Dendritic cell treated with granulocyte-macrophage colony-stimulating factor and Interleukin-4, amounts not matched to agents 40 ng/mL and 50 ng/mL, for 4 days (primary cell): ENCODE measurements at regions of chr12 and their contacts with region 1.

Region 1: GRCh38 chr12:10190558-10191388 is 11.9 kb downstream of the TMEM52B start:
- H3K4me3 Mint-ChIP-seq: no peak overlapping the region
- H3K27ac Mint-ChIP-seq: no peak overlapping the region
- H3K4me1 Mint-ChIP-seq: peaks cover 31% of the 10 kb centered on the region
- H3K27me3 Mint-ChIP-seq: peaks cover 17% of the 10 kb centered on the region

Region 2: GRCh38 chr12:10153271-10154144 is 37.3 kb before region 1 on chr12:
- intact Hi-C with region 1: loop called (anchors 1 kb)
- H3K4me3 Mint-ChIP-seq: peak overlapping the region; percentile 95
- H3K27ac Mint-ChIP-seq: peak overlapping the region; percentile 95
- H3K4me1 Mint-ChIP-seq: peaks cover 15% of the 10 kb centered on the region
- H3K27me3 Mint-ChIP-seq: peaks cover 2% of the 10 kb centered on the region